H1 (cell line): ENCODE measurements at regions of chr15 and their contacts with region 1.

Region 1: GRCh38 chr15:61834076-61834697 is 226.1 kb downstream of the VPS13C start:
- DNase-seq: peak; percentile 56 to 96
- H3K4me3 ChIP-seq: no peak overlapping the region
- H3K27ac ChIP-seq: no peak overlapping the region
- H3K4me1 ChIP-seq: peaks cover 0 to 9% (median under 1%) of the 10 kb centered on the region in 4 experiments; a peak in 5 of 7 replicates
- H3K27me3 ChIP-seq: no peaks in the 10 kb centered on the region
- CTCF ChIP-seq: peak; percentile 86 to 94 (median 88)
- EP300 ChIP-seq: no peak
- POLR2A ChIP-seq: no peak
- RAD21 ChIP-seq: peak; percentile 92 to 95

Region 2: DNA sequence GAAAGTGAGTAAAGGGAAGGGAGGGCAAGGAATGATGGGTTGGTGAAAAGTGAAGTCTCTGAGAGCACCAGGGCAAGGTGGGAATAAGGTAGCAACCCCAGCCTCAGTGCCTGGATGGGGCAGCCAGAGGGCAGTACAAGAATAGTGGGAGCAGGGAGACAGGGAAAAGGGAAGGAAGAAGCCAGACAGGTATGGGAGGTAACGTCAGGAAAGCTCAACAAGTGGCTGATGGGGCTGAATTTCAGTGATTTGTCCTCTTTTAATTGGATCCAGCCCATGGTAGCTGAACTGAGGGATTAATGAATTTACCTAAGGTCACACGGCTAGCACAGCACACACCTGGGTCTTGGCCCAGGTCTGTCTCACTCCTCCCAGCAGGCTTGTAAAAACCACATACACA is 617.7 kb before region 1 on chr15:
- CTCF ChIA-PET with region 1: interaction called, 27 read pairs
- POLR2A ChIA-PET with region 1: no interaction called
- DNase-seq: peak in 1 of 2 experiments; percentile 57
- H3K4me3 ChIP-seq: no peak overlapping the region
- H3K27ac ChIP-seq: no peak overlapping the region
- H3K4me1 ChIP-seq: peaks cover 0 to 9% (median 7%) of the 10 kb centered on the region in 4 experiments; a peak in 4 of 7 replicates
- H3K27me3 ChIP-seq: no peaks in the 10 kb centered on the region
- CTCF ChIP-seq: peak; percentile 62 to 85 (median 84)
- EP300 ChIP-seq: no peak
- POLR2A ChIP-seq: no peak
- RAD21 ChIP-seq: peak; percentile 86

Region 3: GRCh38 chr15:61621146-61621545 is 213.0 kb before region 1 on chr15:
- CTCF ChIA-PET with region 1: interaction called, 42 read pairs
- POLR2A ChIA-PET with region 1: no interaction called
- DNase-seq: peak in 1 of 2 experiments; percentile 57
- H3K4me3 ChIP-seq: no peak overlapping the region
- H3K27ac ChIP-seq: no peak overlapping the region
- H3K4me1 ChIP-seq: no peaks in the 10 kb centered on the region; a peak in 1 of 7 replicates
- H3K27me3 ChIP-seq: no peaks in the 10 kb centered on the region; a peak in 2 of 7 replicates
- CTCF ChIP-seq: peak; percentile 77 to 91 (median 86)
- EP300 ChIP-seq: no peak
- POLR2A ChIP-seq: no peak
- RAD21 ChIP-seq: peak; percentile 92

Region 4: DNA sequence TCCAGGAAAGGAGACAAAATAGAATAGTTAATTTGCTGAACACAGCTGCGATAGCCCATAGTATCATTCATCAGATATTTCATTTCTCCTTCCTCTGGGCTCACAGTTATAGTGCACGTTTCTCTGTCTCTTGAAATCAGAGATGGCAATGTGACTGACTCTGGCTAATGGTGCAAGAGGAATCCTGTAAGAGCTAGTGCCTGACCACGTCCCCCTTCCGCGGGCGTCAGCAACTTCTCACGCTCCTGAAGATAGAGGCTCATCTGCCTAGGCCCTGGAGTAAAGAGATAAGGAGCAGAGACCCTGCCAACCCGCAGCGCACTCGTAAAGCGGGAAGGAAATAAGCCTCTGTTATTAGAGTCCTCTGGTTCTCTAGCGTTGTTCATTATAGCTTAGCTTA is 165.7 kb before region 1 on chr15:
- CTCF ChIA-PET with region 1: interaction called, 17 read pairs
- POLR2A ChIA-PET with region 1: no interaction called
- DNase-seq: no peak
- H3K4me3 ChIP-seq: no peak overlapping the region
- H3K27ac ChIP-seq: no peak overlapping the region
- H3K4me1 ChIP-seq: no peaks in the 10 kb centered on the region
- H3K27me3 ChIP-seq: no peaks in the 10 kb centered on the region
- CTCF ChIP-seq: no peak
- EP300 ChIP-seq: no peak
- POLR2A ChIP-seq: no peak
- RAD21 ChIP-seq: no peak

Region 5: DNA sequence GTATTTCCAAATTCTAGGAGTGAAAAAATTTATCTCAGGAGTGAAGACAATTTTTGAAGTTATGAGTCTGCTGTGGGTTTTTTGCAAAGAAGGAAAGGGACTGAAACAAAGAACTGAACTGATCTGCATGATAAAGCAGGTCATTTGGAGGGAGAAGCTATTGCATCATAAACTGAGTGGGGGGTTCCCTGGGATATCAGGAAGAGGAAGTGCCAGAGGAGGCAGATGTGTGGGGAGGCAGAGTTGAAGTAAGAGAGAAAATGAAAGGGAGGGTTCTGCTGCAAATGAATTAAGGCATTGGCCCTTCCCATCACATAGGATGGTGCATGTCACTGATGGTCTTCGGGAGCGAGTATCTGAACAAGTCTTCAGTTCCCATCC is 153.2 kb before region 1 on chr15:
- CTCF ChIA-PET with region 1: no interaction called
- POLR2A ChIA-PET with region 1: no interaction called
- DNase-seq: no peak
- H3K4me3 ChIP-seq: peak overlapping the region in 2 of 4 experiments; percentile 5 to 14; a peak in 1 of 8 replicates
- H3K27ac ChIP-seq: peak overlapping the region; percentile 35; the same call in 1 of the 2 replicates
- H3K4me1 ChIP-seq: peaks cover 1 to 7% (median 4%) of the 10 kb centered on the region in 4 experiments; a peak in 3 of 7 replicates
- H3K27me3 ChIP-seq: no peaks in the 10 kb centered on the region; a peak in 1 of 7 replicates
- CTCF ChIP-seq: no peak
- EP300 ChIP-seq: no peak
- POLR2A ChIP-seq: no peak
- RAD21 ChIP-seq: no peak

Region 6: GRCh38 chr15:61712129-61712759 is 121.9 kb before region 1 on chr15:
- CTCF ChIA-PET with region 1: interaction called, 12 read pairs
- POLR2A ChIA-PET with region 1: no interaction called
- DNase-seq: no peak
- H3K4me3 ChIP-seq: no peak overlapping the region
- H3K27ac ChIP-seq: no peak overlapping the region
- H3K4me1 ChIP-seq: no peaks in the 10 kb centered on the region
- H3K27me3 ChIP-seq: no peaks in the 10 kb centered on the region
- CTCF ChIP-seq: no peak
- EP300 ChIP-seq: no peak
- POLR2A ChIP-seq: no peak
- RAD21 ChIP-seq: no peak

Region 7: GRCh38 chr15:61811952-61812351 is 22.2 kb before region 1 on chr15:
- CTCF ChIA-PET with region 1: interaction called, 15 read pairs
- POLR2A ChIA-PET with region 1: no interaction called
- DNase-seq: no peak
- H3K4me3 ChIP-seq: no peak overlapping the region
- H3K27ac ChIP-seq: no peak overlapping the region
- H3K4me1 ChIP-seq: peaks cover 0 to 4% (median 3%) of the 10 kb centered on the region in 4 experiments; a peak in 3 of 7 replicates
- H3K27me3 ChIP-seq: no peaks in the 10 kb centered on the region
- CTCF ChIP-seq: no peak
- EP300 ChIP-seq: no peak
- POLR2A ChIP-seq: no peak
- RAD21 ChIP-seq: no peak